Tibial artery (tissue), 4 donors: ENCODE measurements at regions of chr15 and their contacts with region 1.

Region 1: GRCh38 chr15:48352474-48353072 is 21.3 kb downstream of the DUT start:
- DNase-seq: peak in 1 of 2 donors; percentile 46
- H3K4me3 ChIP-seq: no peak overlapping the region
- H3K27ac ChIP-seq: no peak overlapping the region
- H3K4me1 ChIP-seq: no peaks in the 10 kb centered on the region
- H3K27me3 ChIP-seq: no peaks in the 10 kb centered on the region
- CTCF ChIP-seq: peak; percentile 66 to 76

Region 2: DNA sequence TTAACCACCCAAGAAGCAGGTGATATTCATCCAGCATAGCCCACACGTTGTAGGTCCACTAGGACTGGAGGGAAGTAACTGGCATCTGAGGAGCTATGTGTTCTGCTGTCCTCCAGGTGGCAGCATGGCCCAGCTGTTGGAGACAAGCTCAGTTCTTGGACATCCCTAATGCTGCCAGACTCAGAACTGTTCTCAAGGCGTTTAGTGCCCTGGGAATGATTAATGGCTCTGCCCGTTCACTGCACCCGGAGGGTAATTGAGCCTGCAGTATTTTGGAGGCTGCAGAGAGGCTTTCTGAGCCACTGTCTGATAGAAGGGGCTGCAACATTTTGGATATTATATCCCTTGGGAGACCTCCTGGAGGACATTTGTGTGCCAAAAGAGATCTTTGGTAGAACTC is 1156.5 kb before region 1 on chr15:
- intact Hi-C with region 1: loop called (anchors 10 kb)
- DNase-seq: peak; percentile 69 to 85
- H3K4me3 ChIP-seq: no peak overlapping the region
- H3K27ac ChIP-seq: no peak overlapping the region
- H3K4me1 ChIP-seq: no peaks in the 10 kb centered on the region
- H3K27me3 ChIP-seq: no peaks in the 10 kb centered on the region
- CTCF ChIP-seq: peak; percentile 81 to 88

Region 3: DNA sequence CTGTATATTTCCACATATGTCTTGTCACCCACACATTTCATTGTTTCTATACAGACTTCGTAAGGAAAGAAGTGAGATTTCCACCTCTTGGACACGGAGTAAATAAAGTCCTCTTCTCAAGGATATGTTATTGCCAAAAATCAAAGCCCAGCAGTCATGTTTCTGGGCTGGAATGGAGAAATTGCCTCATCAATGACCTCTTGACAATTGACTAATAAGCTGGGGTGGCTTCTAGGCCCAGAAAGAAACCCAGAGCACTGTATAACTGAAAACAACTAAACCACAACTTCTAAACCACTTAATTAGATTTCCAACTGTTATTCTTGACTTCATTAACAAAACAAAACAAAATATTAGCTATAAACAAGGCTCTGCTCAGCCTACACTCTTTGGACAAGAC is 288.2 kb before region 1 on chr15:
- intact Hi-C with region 1: no loop called
- DNase-seq: peak in 1 of 2 donors; percentile 44
- H3K4me3 ChIP-seq: no peak overlapping the region
- H3K27ac ChIP-seq: no peak overlapping the region
- H3K4me1 ChIP-seq: peaks cover 0 to 46% (median 9%) of the 10 kb centered on the region in 4 donors
- H3K27me3 ChIP-seq: no peaks in the 10 kb centered on the region
- CTCF ChIP-seq: no peak

Region 4: DNA sequence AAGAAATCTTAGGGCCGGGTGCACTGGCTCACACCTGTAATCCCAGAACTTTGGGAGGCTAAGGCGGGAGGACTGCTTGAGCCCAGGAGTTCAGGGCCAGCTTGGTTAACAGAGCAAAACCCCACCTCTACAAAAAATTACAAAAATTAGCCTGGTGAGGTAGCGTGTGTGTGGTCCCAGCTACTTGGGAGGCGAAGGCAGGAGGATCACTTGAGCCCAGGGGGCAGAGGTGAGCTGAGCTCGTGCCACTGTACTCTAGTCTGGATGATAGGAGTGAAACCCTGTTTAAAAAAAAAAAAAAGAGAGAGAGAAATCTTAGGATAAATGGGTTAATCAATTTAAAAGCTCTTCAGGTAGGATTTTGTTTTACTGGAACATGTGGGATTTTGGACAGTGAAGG is 52.5 kb before region 1 on chr15:
- intact Hi-C with region 1: no loop called
- DNase-seq: no peak
- H3K4me3 ChIP-seq: no peak overlapping the region
- H3K27ac ChIP-seq: no peak overlapping the region
- H3K4me1 ChIP-seq: no peaks in the 10 kb centered on the region
- H3K27me3 ChIP-seq: no peaks in the 10 kb centered on the region
- CTCF ChIP-seq: no peak

Region 5: DNA sequence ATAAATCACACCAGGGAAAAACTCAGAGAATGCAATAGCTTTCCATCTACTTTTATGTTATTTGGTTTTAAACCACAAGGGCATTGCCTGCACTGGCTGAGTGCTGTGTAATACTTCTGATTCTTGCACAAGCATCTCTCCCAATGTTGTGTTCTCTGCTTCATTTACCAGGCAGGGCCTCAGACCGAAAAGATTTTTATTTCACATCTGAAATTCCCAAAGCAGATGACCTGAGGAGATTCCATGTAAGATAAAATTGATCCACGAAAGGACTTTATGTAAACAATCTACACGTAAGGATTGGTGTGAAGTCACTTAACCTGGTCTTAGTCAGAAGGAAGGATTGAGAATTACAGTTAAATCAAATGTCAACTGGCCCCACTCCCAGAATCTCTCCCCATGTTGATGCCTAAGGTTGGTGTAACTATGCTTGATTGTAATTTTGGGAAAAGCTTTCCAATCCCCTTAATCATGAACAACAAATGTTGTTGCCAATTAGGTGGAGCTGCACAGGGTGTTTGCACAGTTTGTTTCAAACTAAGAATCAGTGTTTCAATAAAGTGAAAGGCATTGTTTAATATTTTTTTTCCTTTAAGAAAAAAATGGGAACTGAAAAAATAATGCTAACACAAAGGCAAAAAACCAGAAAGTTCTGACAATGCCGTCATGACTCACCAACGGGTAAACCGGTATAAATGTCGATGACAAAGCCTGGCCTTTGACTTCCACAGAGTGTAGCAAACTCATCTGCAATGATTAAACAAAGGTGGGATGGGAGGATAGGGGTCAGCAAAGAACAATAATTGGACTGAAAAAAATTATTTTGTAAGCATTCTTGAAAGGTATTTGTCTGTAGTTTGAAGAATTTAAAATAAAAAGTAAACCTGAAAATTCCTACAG is 107.2 kb after region 1 on chr15:
- intact Hi-C with region 1: loop called (anchors 10 kb)
- DNase-seq: peak in 1 of 2 donors; percentile 46
- H3K4me3 ChIP-seq: no peak overlapping the region
- H3K27ac ChIP-seq: peak overlapping the region in 1 of 2 donors; percentile 43
- H3K4me1 ChIP-seq: peaks cover 0 to 18% (median 0%) of the 10 kb centered on the region in 4 donors
- H3K27me3 ChIP-seq: no peaks in the 10 kb centered on the region
- CTCF ChIP-seq: peak in 1 of 2 experiments; percentile 10

Region 6: GRCh38 chr15:48472753-48473152 is 120.2 kb after region 1 on chr15:
- intact Hi-C with region 1: no loop called
- DNase-seq: no peak
- H3K4me3 ChIP-seq: no peak overlapping the region
- H3K27ac ChIP-seq: no peak overlapping the region
- H3K4me1 ChIP-seq: peaks cover 0 to 7% (median 4%) of the 10 kb centered on the region in 4 donors
- H3K27me3 ChIP-seq: no peaks in the 10 kb centered on the region
- CTCF ChIP-seq: no peak